Heart left ventricle (tissue), 16 donors: ENCODE measurements at regions of chr3 and their contacts with region 1.

Region 1: GRCh38 chr3:89107461-89108290 is at the start of gene EPHA3:
- DNase-seq: peak; percentile 72 to 84 (median 82)
- ATAC-seq: peak; percentile 73 to 97 (median 94)
- H3K4me3 ChIP-seq: peak within 1 kb of the TSS; percentile 34 to 71 (median 58)
- H3K27ac ChIP-seq: peak within 1 kb of the TSS in 8 of 12 donors; percentile 12 to 60 (median 25)
- H3K4me1 ChIP-seq: peaks cover 0 to 14% (median 0%) of the 10 kb centered on the region in 12 donors
- H3K27me3 ChIP-seq: peaks cover 0 to 18% (median 0%) of the 10 kb centered on the region in 9 donors
- CTCF ChIP-seq: no peak
- POLR2A ChIP-seq: peak in 1 of 2 donors; percentile 35
- total RNA-seq, gene EPHA3: 2.2 to 9.4 (median 4.4) TPM

Region 2: DNA sequence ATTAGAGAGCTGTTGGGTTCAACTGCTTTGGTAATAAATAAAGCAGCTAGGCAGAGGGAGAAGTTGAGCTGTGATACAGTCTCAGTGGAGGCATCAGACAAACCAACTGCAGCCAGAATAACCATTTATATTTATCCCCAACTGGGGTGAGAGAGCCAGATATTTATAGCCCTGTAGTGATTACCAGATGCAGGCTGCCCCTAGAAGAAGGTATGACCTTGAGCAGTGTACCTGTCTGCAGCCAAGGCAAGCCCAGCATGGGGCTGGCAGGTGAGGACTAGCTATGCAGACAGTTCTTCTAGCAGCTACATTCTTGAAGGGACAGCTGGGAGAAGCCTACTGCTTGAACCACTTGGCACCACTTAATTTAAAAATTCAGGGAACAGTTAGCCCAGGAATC is 144.7 kb before region 1 on chr3:
- intact Hi-C with region 1: loop called in 1 of 10 experiments (anchors 10 kb)
- DNase-seq: peak in 1 of 5 donors; percentile 22
- ATAC-seq: peak; percentile 95 to 98 (median 98)
- H3K4me3 ChIP-seq: no peak overlapping the region
- H3K27ac ChIP-seq: peak overlapping the region in 2 of 12 donors; percentile 21 to 31
- H3K4me1 ChIP-seq: peaks cover 0 to 12% (median 3%) of the 10 kb centered on the region in 12 donors
- H3K27me3 ChIP-seq: no peaks in the 10 kb centered on the region
- CTCF ChIP-seq: no peak
- POLR2A ChIP-seq: no peak

Region 3: DNA sequence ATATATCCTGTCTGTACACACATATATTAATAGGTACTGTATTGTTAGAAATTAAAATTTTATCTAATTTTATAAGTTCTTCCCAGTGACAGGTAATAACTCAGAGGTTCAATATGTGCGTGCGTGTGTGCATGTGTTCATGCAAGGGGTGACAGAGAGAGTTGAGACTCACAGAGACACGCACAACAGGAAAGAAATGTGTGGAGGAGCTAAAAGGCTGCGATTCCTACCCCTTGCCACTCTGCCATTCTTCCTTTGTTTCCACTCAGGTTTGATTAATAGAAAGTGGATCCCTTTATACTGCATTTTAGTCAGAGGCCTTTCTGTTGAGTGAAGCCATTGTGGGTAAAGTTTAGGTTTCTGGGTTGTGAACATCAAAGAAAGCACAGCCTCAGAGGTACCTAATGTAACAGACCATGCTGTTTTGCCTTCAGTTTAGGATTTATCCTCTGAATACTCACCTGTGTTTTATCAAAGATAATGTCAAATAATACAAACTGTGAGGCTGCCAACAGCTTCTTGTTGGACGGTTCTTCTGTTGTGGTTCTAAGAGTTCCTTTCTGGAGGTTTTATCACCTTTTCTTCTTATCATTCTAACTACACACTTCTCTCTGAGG is 182.0 kb after region 1 on chr3:
- intact Hi-C with region 1: no loop called
- DNase-seq: no peak
- ATAC-seq: no peak
- H3K4me3 ChIP-seq: no peak overlapping the region
- H3K27ac ChIP-seq: no peak overlapping the region
- H3K4me1 ChIP-seq: no peaks in the 10 kb centered on the region
- H3K27me3 ChIP-seq: no peaks in the 10 kb centered on the region
- CTCF ChIP-seq: no peak
- POLR2A ChIP-seq: no peak